AG04449 (cell line): ENCODE measurements at regions of chr19 and their contacts with region 1.

Region 1: DNA sequence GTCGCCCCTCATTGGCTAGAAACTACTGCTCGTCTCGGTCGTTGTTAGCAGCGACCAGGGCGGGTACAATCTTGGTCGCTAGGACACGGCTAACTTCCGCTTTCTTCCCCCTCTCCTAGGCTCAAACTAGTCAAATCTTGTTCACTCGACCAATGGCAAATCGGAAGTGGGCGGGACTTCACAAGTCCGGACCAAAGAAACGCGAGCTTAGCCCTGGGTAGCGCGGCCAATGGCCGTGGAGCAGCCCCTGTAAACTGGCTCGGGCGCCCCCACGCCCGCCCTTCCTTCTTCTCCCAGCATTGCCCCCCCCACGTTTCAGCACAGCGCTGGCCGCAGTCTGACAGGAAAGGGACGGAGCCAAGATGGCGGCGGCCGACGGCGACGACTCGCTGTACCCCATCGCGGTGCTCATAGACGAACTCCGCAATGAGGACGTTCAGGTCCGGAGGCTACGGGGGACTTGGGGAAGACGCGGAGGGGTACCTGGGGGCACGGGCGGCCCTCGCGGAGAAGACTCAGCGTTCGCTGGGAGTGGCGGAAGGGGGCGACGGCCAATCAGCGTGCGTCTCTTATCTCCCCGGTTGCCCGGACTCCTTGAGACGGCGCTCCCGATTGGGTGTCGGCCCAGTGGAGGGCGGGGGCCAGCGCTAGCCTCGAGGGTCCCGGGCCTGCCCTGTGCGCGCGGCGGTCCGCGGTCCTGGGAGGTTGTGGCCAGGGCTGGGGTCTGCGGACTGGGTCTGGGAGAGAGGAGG is at the start of gene PPP2R1A:
- DNase-seq: peak; percentile 100
- H3K4me3 ChIP-seq: peak within 1 kb of the TSS; percentile 96
- CTCF ChIP-seq: no peak

Region 2: DNA sequence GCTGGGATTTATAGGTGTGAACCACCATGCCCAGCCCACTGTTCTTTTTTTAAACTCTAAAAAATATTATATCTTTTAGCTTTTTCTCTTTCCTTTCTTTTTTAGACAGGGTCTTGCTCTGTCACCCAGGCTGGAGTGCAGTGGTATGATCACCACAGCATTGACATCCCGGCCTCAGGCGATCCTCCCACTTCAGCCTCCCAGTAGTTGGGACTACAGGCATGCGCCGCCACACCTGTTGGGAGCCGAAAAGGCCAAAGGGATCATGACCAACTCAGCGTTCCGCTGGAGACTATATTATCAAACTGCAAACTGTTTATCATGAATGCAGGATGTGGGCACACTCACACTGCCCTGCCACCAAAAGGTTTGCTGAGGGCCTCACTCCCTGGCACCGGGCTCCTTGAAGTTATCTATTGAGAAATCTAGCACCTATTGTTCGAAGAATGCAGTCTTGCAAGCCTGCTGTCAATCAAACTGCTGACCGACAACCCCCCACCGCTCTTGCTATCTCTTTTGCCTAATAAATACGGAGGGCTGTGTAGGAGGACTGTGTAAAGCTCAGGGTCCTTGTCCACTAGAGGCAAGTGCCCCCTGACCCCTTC is 13.4 kb before region 1 on chr19:
- CTCF ChIA-PET with region 1: no interaction called
- POLR2A ChIA-PET with region 1: interaction called, 13 read pairs
- DNase-seq: no peak
- H3K4me3 ChIP-seq: no peak overlapping the region
- CTCF ChIP-seq: no peak

Region 3: DNA sequence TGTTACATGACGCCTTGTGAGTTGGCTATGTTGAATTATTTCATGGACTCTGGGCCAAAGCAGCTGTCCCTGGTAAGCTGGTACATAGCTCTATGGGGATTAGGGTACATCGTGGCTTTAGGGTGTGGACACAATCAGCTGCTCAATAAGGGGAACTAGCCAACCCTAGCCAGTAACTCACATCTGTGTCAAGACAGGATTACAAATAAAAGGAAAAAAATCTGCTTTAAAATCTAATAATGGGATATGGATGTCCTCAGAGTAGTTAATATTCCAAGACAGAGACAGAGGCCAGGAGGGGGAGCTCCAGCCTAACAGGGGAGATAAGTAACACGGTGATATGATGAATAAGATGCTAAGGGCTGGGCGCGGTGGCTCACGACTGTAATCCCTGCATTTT is 58.3 kb after region 1 on chr19:
- CTCF ChIA-PET with region 1: no interaction called
- POLR2A ChIA-PET with region 1: no interaction called
- DNase-seq: no peak
- H3K4me3 ChIP-seq: no peak overlapping the region
- CTCF ChIP-seq: peak; percentile 39